A673 (cell line): ENCODE measurements at regions of chr10 and their contacts with region 1.

Region 1: DNA sequence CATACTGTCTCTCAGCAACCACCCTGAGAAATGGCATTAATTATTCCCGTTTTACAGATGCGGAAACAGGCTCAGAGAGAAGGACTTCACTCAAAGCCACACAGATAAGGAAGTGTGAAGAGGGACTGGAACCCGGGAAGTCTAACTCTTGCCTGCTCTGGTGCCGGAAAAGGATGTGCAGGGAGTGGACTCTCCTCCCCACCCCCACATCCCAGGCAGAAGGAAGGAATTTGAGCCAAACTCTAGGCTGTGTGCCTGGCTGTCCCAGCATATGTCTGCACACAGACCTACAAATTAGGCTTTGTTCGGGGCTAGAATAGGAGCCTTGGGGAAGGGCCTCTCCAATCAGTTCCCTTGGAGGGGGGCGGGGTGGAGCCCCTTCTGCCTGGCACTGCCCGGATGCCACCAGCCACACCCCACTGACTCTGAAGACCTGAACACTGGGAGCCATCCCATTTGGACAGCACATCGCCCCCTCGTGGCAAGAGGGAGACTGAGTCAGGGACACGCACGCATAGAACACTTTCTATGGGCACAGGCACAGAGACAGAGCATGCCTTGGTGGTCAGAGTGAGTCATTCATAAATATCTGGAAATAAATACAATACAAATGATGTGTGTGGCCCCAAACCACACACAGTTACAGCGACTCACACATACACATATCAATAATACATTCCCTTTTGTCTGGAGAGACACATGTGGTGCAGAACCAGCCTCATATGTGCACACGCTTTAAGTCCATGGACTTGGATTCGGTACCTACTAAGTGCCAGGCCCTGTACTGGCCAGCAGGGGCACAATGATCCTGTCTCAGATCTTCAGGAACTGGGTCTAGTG is 13.1 kb downstream of the LZTS2 start:
- DNase-seq: peak; percentile 95
- H3K4me3 ChIP-seq: no peak overlapping the region
- H3K27ac ChIP-seq: no peak overlapping the region
- H3K4me1 ChIP-seq: peaks cover 9% of the 10 kb centered on the region
- H3K27me3 ChIP-seq: no peaks in the 10 kb centered on the region
- CTCF ChIP-seq: peak; percentile 99

Region 2: DNA sequence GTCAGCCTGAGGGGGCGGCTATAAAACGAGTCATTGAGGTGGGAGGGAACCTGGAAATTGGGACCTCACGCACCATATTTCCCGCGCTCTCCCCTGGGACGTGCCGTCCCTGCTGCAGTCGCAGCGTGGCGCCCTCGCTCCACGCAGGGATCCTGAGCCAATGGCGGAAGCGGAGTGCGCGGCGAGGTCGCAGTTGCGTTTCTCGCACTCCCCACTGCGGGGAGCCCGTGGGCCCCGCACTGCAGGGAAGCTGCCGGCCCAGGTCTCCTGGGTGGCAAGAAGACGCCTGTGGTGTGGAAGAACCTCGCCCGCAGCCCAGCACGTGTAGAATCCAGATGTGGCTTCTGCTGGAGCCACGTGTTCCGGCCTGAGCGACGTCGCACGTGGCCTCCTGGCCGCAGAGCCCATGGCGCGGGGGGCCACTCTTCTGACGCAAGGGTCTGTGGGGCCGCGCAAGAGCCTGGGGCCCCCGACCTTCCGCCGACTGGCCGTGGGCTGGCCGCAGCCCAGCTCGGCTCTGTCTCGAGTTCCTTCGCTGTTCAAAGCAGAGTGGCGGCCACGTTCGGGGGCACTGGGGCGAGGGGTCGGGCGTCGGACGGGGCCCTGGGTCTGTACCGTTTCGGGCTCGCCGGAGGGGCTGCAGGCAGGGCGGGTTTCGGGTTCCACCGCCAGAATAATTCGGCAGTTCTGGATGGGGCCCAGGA is 450.6 kb before region 1 on chr10:
- CTCF ChIA-PET with region 1: interaction called, 5 read pairs
- POLR2A ChIA-PET with region 1: no interaction called
- intact Hi-C with region 1: loop called (anchors 2 kb)
- DNase-seq: peak; percentile 89
- H3K4me3 ChIP-seq: peak overlapping the region; percentile 15
- H3K27ac ChIP-seq: no peak overlapping the region
- H3K4me1 ChIP-seq: peaks cover 10% of the 10 kb centered on the region
- H3K27me3 ChIP-seq: peaks cover 15% of the 10 kb centered on the region
- CTCF ChIP-seq: peak; percentile 99

Region 3: GRCh38 chr10:100969187-100970075 is 43.3 kb before region 1 on chr10 and contains the start of gene SEMA4G:
- CTCF ChIA-PET with region 1: interaction called, 4 read pairs
- POLR2A ChIA-PET with region 1: no interaction called
- intact Hi-C with region 1: loop called (anchors 1 kb)
- DNase-seq: peak; percentile 45
- H3K4me3 ChIP-seq: peak within 1 kb of the TSS; percentile 69
- H3K27ac ChIP-seq: peak within 1 kb of the TSS; percentile 58
- H3K4me1 ChIP-seq: peaks cover 5% of the 10 kb centered on the region
- H3K27me3 ChIP-seq: no peaks in the 10 kb centered on the region
- CTCF ChIP-seq: peak; percentile 67
- total RNA-seq, gene SEMA4G: 6.1 and 9.2 TPM in 2 replicates

Region 4: DNA sequence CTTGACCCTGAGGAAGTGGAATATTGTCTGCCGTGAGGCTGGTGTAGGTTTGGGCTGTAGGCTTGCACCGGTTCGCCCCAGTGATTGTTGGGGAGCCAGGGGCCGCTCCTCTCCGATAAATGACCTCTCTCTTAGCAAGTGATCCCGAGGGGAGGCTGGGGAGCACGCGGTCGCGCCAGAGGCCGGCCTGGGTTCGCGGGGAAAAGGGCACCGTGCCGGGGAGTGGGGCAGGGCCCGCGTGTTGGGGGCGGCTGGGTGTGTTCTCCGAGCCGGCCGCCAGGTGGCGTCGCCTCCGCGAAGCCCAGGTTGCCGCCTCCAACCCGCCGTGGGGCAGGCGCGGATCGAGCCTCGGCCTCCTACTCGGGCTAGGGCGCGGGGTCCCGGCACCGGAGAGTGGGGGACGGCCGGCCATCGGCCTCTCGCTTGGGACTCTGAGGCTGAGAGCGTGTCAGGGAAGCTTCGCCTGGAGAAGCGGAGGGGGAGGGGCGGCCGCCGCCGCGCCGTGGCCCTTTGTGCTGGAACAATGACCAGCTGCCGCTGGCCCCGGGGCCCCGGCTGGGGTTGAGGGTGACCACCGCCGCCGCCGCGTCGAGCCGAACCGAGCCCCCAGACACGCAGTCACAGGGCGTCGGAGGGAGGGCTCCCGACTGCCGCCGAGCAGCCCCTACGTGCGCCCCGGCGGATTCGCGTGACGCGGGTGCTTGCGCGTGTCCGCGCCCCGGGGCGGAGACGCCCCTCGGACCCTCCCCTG is 13.6 kb before region 1 on chr10:
- CTCF ChIA-PET with region 1: interaction called, 23 read pairs
- POLR2A ChIA-PET with region 1: no interaction called
- intact Hi-C with region 1: loop called (anchors 1 kb)
- DNase-seq: peak; percentile 84
- H3K4me3 ChIP-seq: peak overlapping the region; percentile 88
- H3K27ac ChIP-seq: peak overlapping the region; percentile 98
- H3K4me1 ChIP-seq: peaks cover 44% of the 10 kb centered on the region
- H3K27me3 ChIP-seq: no peaks in the 10 kb centered on the region
- CTCF ChIP-seq: peak; percentile 83